Left lung (tissue), 14 donors: ENCODE measurements at regions of chr7 and their contacts with region 1.

Region 1: DNA sequence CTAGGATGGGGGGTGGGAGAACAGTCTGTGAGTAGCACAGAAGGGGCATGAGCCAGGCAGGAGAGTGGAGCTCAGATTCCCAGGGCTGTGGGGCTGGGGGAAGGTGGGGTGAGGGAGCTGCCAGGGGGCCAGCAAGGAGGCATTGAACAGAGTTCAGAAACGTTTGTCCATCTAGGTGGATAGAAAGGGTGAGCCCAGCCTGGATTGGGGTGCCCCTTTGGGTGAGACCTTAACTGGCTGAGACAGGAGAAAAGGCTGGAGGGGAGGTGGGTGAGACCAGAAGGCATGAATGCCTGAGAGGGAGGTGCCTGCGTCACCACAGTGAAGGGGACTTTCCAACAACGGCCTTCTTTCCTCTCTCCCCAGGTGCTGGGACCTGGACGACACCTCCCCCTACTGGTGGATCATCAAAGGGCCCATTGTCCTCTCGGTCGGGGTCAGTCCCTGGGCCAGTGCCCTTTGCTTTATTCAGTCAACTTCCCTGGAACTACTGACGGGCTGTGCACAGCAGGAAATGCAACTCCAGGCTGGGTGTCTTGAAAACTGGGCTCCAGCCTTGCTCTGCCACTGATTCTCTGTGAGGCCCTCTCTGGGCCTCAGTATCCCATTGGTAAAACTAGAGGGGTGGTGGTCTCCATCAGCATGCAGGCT is 11.0 kb downstream of the GHRHR start:
- DNase-seq: peak in 2 of 4 donors; percentile 66
- ATAC-seq: peak; percentile 94
- H3K4me3 ChIP-seq: no peak overlapping the region
- H3K27ac ChIP-seq: no peak overlapping the region
- H3K4me1 ChIP-seq: no peaks in the 10 kb centered on the region
- H3K27me3 ChIP-seq: no peaks in the 10 kb centered on the region
- CTCF ChIP-seq: peak; percentile 69 to 72

Region 2: GRCh38 chr7:30585675-30586074 is 389.1 kb before region 1 on chr7:
- intact Hi-C with region 1: no loop called
- DNase-seq: no peak
- ATAC-seq: no peak
- H3K4me3 ChIP-seq: no peak overlapping the region
- H3K27ac ChIP-seq: no peak overlapping the region
- H3K4me1 ChIP-seq: no peaks in the 10 kb centered on the region
- H3K27me3 ChIP-seq: no peaks in the 10 kb centered on the region
- CTCF ChIP-seq: no peak

Region 3: DNA sequence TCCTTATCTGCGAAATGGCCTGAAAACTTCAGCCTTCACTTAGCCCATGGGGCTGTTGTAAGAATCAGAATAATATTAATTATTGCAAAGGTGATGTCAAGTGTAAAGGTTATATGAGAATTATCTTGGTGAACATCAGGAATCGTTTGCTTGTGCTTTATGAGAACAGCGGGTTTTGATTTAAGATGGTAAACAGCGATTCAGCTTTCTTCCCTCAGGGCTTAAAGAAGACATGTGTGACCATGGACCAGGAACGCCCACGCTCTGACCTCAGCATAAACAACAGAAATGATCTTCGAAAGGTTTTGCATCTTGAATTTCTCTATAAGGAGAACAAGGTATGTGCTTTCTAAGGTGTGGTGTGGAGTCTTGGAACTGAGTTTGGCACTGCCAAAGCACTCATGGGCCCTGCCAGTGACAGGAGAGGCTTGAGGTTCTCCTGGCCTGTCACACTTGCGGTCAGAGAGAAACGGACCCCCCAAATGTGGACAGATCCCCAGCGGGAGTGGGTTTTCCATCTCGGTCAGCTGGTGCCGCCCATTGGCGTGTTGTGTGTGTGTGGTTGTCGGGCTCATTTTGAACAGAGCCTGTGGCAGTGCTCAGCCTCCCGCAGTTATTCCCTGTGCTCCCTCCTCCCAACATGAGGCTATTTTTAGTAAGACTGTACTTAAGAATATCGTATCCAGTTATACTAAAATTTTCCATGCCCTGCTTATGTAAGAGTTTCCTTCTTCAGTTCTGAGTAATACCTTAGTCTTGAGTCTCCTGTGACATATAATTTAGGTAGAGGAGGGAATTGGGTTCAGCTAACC is 196.3 kb before region 1 on chr7:
- intact Hi-C with region 1: no loop called
- DNase-seq: no peak
- ATAC-seq: peak; percentile 85
- H3K4me3 ChIP-seq: no peak overlapping the region
- H3K27ac ChIP-seq: peak overlapping the region in 1 of 2 donors; percentile 76
- H3K4me1 ChIP-seq: no peaks in the 10 kb centered on the region
- H3K27me3 ChIP-seq: no peaks in the 10 kb centered on the region
- CTCF ChIP-seq: no peak

Region 4: GRCh38 chr7:30800785-30801252 is 173.9 kb before region 1 on chr7:
- intact Hi-C with region 1: loop called in 1 of 2 experiments (anchors 10 kb)
- DNase-seq: peak in 2 of 4 donors; percentile 67 to 79
- ATAC-seq: peak; percentile 86
- H3K4me3 ChIP-seq: no peak overlapping the region
- H3K27ac ChIP-seq: no peak overlapping the region
- H3K4me1 ChIP-seq: peaks cover 23 to 33% of the 10 kb centered on the region in 2 donors
- H3K27me3 ChIP-seq: no peaks in the 10 kb centered on the region
- CTCF ChIP-seq: peak; percentile 59 to 66

Region 5: DNA sequence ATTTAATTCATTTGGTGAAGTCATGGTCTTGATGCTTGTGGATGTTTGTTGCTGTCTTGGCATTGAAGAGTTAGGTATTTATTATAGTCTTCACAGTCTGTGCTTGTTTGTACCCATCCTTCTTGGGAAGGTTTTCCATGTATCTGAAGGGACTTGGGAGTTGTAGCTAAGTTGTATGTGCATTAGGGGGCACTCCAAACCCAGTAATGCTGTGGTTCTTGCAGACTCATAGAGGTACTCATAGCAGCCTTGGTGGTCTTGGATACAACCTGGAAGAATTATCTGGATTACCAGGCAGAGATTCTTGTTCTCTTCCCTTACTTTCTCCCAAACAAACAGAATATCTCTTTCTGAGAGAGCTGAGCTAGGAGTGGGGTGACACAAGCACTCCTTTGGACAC is 170.6 kb after region 1 on chr7:
- intact Hi-C with region 1: no loop called
- DNase-seq: no peak
- ATAC-seq: no peak
- H3K4me3 ChIP-seq: no peak overlapping the region
- H3K27ac ChIP-seq: no peak overlapping the region
- H3K4me1 ChIP-seq: no peaks in the 10 kb centered on the region
- H3K27me3 ChIP-seq: no peaks in the 10 kb centered on the region
- CTCF ChIP-seq: no peak